Activated naive CD4-positive, alpha-beta T cell treated with anti-CD3 and anti-CD28 coated beads for 36 hours (primary cell): ENCODE measurements at regions of chr7 and their contacts with region 1.

Region 1: GRCh38 chr7:48130658-48131108 is 40.6 kb upstream of the ABCA13 start:
- DNase-seq: no peak
- H3K4me3 Mint-ChIP-seq: no peak overlapping the region
- H3K27ac Mint-ChIP-seq: no peak overlapping the region
- H3K4me1 Mint-ChIP-seq: peaks cover 6% of the 10 kb centered on the region
- H3K27me3 Mint-ChIP-seq: peaks cover 11% of the 10 kb centered on the region

Region 2: GRCh38 chr7:48074204-48074654 is 56.5 kb before region 1 on chr7:
- CTCF ChIA-PET with region 1: no interaction called
- intact Hi-C with region 1: no loop called
- DNase-seq: no peak
- H3K4me3 Mint-ChIP-seq: no peak overlapping the region
- H3K27ac Mint-ChIP-seq: no peak overlapping the region
- H3K4me1 Mint-ChIP-seq: no peaks in the 10 kb centered on the region
- H3K27me3 Mint-ChIP-seq: no peaks in the 10 kb centered on the region

Region 3: GRCh38 chr7:48251766-48252165 is 121.1 kb after region 1 on chr7:
- CTCF ChIA-PET with region 1: interaction called, 4 read pairs
- intact Hi-C with region 1: loop called (anchors 5 kb)
- DNase-seq: no peak
- H3K4me3 Mint-ChIP-seq: no peak overlapping the region
- H3K27ac Mint-ChIP-seq: no peak overlapping the region
- H3K4me1 Mint-ChIP-seq: peaks cover 10% of the 10 kb centered on the region
- H3K27me3 Mint-ChIP-seq: peaks cover 7% of the 10 kb centered on the region